ENCODE measurements at regions of chr6 and their contacts with region 1.

Region 1: DNA sequence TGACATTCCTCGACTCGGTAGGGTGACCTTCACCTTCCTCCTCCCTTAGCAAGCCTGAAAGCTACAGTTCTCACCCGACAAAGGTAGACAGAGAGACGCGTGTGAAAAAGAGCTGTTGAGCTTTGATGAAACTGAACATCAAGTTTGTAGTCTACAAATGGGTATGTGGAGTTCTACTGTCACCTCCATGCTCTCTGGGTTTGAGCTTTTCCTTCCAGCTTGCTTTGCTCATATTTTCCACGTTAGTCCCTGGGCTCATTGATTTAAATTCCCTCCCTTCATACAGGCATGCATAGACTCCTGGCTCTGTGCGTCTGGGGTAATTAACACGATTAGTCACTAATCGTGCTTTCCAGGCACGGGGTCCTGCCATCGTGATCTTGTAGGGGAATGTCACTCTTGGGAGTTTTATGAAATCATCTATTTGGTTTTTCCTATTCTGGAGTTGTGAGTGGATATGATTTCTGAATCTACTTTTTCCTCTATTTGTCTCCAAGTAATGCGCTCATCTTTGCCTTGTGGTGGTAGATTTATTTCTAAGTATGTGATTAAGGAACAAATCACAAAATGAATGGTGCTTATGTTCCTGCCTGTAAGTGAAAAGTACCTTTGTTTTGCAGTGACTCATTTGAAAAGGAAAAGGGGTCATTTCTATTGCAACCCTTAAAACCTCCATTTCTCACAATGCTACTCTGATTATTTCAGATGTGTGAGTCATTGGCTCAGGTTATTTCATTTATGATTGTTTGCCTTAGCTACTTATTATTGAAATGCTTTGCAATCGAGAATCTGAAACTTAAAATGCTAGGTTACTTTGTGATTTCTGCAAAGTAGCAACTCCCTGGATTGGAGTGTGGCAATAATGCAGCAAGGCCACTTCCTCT is 154.6 kb downstream of the ZDHHC14 start:
- DNase-seq: peak; percentile 36
- H3K4me3 Mint-ChIP-seq: peak overlapping the region; percentile 56
- H3K27ac Mint-ChIP-seq: peak overlapping the region; percentile 100
- H3K4me1 Mint-ChIP-seq: peaks cover 64% of the 10 kb centered on the region
- H3K27me3 Mint-ChIP-seq: no peaks in the 10 kb centered on the region
- CTCF ChIP-seq: no peak

Region 2: GRCh38 chr6:157305670-157306653 is 229.6 kb before region 1 on chr6:
- CTCF ChIA-PET with region 1: no interaction called
- intact Hi-C with region 1: no loop called
- DNase-seq: no peak
- H3K4me3 Mint-ChIP-seq: no peak overlapping the region
- H3K27ac Mint-ChIP-seq: no peak overlapping the region
- H3K4me1 Mint-ChIP-seq: peaks cover 10% of the 10 kb centered on the region
- H3K27me3 Mint-ChIP-seq: no peaks in the 10 kb centered on the region
- CTCF ChIP-seq: no peak

Region 3: GRCh38 chr6:157323255-157323965 is 212.2 kb before region 1 on chr6 and contains the start of gene TMEM242:
- CTCF ChIA-PET with region 1: no interaction called
- intact Hi-C with region 1: loop called (anchors 5 kb)
- DNase-seq: peak; percentile 90
- H3K4me3 Mint-ChIP-seq: peak within 1 kb of the TSS; percentile 83
- H3K27ac Mint-ChIP-seq: peak within 1 kb of the TSS; percentile 60
- H3K4me1 Mint-ChIP-seq: peaks cover 21% of the 10 kb centered on the region
- H3K27me3 Mint-ChIP-seq: no peaks in the 10 kb centered on the region
- CTCF ChIP-seq: no peak
- total RNA-seq, gene TMEM242: 7.9 and 9.9 TPM in 2 replicates

Region 4: GRCh38 chr6:157379656-157380454 is 155.7 kb before region 1 on chr6:
- CTCF ChIA-PET with region 1: interaction called, 3 read pairs
- intact Hi-C with region 1: loop called (anchors 5 kb)
- DNase-seq: peak; percentile 83
- H3K4me3 Mint-ChIP-seq: peak overlapping the region; percentile 80
- H3K27ac Mint-ChIP-seq: peak overlapping the region; percentile 69
- H3K4me1 Mint-ChIP-seq: peaks cover 20% of the 10 kb centered on the region
- H3K27me3 Mint-ChIP-seq: no peaks in the 10 kb centered on the region
- CTCF ChIP-seq: no peak

Region 5: DNA sequence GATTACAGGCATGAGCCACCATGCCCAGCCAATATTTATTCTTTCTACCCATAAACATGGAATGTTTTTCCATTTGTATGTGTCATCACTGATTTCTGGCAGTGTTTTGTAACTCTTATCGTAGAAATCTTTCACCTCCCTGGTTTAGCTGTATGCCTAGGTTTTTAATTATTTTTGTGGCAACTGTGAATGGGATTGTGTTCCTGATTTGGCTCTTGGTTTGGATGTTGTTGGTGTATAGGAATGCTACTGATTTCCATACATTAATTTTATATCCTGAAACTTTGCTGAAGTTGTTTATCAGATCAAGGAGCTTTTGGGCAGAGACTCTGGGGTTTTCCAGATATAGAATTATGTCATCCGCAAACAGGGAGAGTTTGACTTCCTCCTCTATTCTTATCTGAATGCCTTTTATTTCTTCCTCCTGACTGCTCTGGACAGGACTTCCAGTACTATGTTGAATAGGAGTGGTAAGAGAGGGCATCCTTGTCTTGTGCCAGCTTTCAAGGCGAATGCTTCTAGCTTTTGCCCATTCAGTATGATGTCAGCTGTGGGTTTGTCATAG is 44.0 kb after region 1 on chr6:
- CTCF ChIA-PET with region 1: interaction called, 3 read pairs
- intact Hi-C with region 1: loop called (anchors 5 kb)
- DNase-seq: peak; percentile 16
- H3K4me3 Mint-ChIP-seq: peak overlapping the region; percentile 20
- H3K27ac Mint-ChIP-seq: peak overlapping the region; percentile 71
- H3K4me1 Mint-ChIP-seq: peaks cover 19% of the 10 kb centered on the region
- H3K27me3 Mint-ChIP-seq: no peaks in the 10 kb centered on the region
- CTCF ChIP-seq: no peak

Region 6: DNA sequence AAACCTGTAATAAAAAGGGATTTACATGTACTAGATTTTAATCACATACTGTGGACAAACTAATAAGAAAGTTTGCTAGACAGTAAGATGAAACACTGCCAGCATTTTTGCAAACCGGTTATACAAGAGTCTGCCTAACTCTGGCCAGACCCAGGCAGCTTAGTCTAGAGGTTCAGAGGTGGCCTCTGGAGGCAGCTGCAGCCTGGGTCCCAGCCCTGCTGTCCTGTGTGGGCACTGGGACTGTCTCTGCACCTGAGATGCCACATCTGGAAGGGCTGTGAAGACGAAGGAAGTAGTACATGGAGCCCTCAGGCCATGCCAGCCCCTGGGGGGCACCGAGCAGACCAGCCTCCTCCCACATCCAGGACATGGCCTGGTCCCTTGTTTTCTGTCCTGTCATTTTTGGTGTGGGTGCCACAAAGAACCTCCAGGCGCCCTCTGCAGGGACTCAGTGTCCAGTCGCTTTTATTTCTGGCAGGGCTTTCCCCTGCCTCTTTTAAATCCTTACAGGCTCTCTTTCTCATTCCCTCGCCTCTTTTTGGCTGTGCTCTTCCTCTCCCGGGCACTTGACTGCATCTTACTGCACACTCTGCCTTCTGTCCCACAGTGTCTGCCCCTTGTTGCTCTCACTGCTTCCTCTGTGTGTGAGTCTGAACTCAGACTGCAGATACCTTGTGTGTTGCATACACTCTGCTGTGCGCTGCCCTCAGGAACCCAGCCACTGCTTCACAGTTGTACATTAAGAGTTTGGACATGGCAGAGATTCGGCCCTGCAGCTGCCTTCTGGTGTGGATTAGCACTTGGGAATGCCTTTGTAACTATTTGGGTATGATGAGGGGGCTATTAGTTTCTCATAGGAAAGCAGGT is 62.1 kb after region 1 on chr6:
- CTCF ChIA-PET with region 1: no interaction called
- intact Hi-C with region 1: loop called (anchors 5 kb)
- DNase-seq: peak; percentile 44
- H3K4me3 Mint-ChIP-seq: no peak overlapping the region
- H3K27ac Mint-ChIP-seq: peak overlapping the region; percentile 30
- H3K4me1 Mint-ChIP-seq: peaks cover 17% of the 10 kb centered on the region
- H3K27me3 Mint-ChIP-seq: no peaks in the 10 kb centered on the region
- CTCF ChIP-seq: peak; percentile 39

Region 7: DNA sequence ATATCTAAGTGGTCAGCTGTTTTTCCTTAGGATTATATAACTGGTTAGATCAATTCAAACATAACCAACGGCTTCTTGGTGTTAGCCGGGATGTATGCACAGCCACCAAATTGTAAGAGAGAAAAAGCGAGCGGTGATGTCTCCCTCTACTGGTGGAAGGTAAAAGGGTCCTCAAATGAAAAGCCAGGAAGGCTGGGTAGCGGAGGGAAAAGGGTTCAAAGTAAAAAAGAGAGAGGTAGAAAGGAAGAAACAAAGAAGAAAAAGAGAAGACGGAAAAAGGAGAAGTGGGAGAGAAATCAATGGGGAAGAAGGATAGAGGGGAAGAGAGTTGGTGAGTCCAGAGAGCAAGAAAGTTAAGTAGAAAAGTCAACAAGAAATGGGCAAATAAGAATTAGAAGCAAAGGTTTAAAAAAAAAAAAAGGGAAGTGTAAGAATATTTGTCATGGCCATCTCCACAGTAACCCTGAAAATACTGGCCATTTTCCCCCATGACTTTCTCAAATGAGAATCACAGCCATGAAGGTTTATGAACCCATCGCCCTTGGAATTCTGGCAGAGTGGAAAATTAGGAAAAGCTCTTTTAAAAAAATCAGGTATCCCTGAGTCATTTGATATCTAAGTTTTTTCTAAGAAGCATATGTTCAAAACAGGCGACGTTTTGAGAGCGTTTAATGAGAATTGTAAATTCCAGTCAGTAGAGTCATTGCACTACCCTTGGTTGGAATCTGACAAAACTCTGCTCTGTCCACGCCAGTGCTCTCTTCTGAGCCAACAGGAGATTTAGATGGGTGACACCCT is 131.8 kb after region 1 on chr6:
- CTCF ChIA-PET with region 1: no interaction called
- intact Hi-C with region 1: loop called (anchors 10 kb)
- DNase-seq: peak; percentile 44
- H3K4me3 Mint-ChIP-seq: no peak overlapping the region
- H3K27ac Mint-ChIP-seq: peak overlapping the region; percentile 12
- H3K4me1 Mint-ChIP-seq: peaks cover 9% of the 10 kb centered on the region
- H3K27me3 Mint-ChIP-seq: no peaks in the 10 kb centered on the region
- CTCF ChIP-seq: peak; percentile 45

Region 8: DNA sequence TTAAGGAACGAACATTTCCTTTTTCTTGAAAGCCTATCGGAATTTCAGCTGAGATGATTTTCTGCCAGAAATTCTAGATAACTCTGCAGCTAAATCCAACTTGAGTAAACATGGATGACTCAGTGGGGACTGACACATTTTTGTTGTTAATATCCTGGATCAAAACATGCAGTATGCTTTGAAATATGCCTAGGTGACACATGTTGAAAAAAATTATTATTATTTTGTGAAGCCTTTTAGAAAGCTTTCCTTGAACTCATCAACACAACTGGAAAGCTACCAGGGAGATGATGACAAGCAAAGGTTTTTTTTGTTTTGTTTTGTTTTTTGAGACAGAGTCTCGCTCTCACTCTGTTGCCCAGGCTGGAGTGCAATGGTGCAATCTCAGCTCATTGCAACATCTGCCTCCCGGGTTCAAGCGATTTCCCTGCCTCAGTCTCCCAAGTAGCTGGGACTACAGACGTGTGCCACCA is 147.4 kb after region 1 on chr6:
- CTCF ChIA-PET with region 1: no interaction called
- intact Hi-C with region 1: no loop called
- DNase-seq: no peak
- H3K4me3 Mint-ChIP-seq: no peak overlapping the region
- H3K27ac Mint-ChIP-seq: no peak overlapping the region
- H3K4me1 Mint-ChIP-seq: peaks cover 6% of the 10 kb centered on the region
- H3K27me3 Mint-ChIP-seq: no peaks in the 10 kb centered on the region
- CTCF ChIP-seq: no peak

Region 9: GRCh38 chr6:158109744-158110143 is 574.2 kb after region 1 on chr6:
- CTCF ChIA-PET with region 1: no interaction called
- intact Hi-C with region 1: no loop called
- DNase-seq: no peak
- H3K4me3 Mint-ChIP-seq: no peak overlapping the region
- H3K27ac Mint-ChIP-seq: no peak overlapping the region
- H3K4me1 Mint-ChIP-seq: no peaks in the 10 kb centered on the region
- H3K27me3 Mint-ChIP-seq: no peaks in the 10 kb centered on the region
- CTCF ChIP-seq: no peak